ENCODE measurements at regions of chr6 and their contacts with region 1.

Region 1: DNA sequence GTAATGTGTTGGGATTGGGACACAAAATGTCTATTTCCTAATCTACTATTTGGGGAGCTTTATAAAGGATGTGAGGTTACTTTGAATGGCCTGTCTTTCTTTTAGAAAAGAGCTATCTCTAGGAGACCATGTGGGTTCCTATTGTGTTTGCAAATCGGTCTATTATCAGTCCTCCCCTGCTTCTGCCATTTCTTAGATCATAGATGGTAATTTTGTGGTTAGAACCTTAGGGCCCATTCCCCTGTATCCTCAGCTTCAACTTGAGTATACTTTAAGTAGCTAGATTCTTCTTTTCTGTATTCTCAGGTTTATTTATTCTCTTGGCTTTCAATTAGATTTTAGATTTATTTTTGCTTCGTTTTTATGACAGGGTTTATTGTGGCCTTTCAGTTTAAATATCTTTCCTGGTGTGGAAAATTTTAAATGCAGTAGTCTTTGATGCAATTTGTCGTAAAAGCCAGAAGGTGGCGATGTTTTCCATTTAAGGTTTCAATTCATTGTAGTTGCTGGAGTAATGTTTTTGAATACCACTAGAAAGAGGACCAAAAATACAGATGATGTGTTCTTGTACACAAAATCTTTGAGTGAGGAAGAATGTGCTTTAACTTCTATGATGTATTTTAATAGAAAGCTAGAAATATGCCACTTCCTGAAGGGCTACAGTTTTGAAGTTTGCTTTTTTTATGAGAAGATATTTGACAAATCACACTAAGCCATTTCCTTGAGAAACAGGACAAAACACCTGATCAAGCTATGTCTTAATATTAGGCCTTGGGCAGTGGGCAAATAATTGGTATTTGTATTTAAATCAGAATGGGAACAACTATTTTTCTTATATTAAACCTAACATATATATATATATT is 20.3 kb downstream of the TBPL1 start:
- DNase-seq: no peak
- H3K4me3 ChIP-seq: no peak overlapping the region
- H3K27ac ChIP-seq: no peak overlapping the region
- H3K4me1 ChIP-seq: peaks cover 0 to 7% (median 0%) of the 10 kb centered on the region in 4 experiments; a peak in 3 of 7 replicates
- H3K27me3 ChIP-seq: no peaks in the 10 kb centered on the region
- CTCF ChIP-seq: peak in 2 of 3 experiments; percentile 38 to 53; a peak in 2 of 4 replicates
- EP300 ChIP-seq: no peak
- POLR2A ChIP-seq: no peak
- RAD21 ChIP-seq: peak; percentile 71 to 75

Region 2: GRCh38 chr6:133945158-133945557 is 28.2 kb before region 1 on chr6:
- CTCF ChIA-PET with region 1: interaction called, 12 read pairs
- POLR2A ChIA-PET with region 1: no interaction called
- DNase-seq: no peak
- H3K4me3 ChIP-seq: no peak overlapping the region
- H3K27ac ChIP-seq: no peak overlapping the region
- H3K4me1 ChIP-seq: no peaks in the 10 kb centered on the region; a peak in 1 of 7 replicates
- H3K27me3 ChIP-seq: no peaks in the 10 kb centered on the region
- CTCF ChIP-seq: peak in 2 of 3 experiments; percentile 15 to 23; a peak in 2 of 4 replicates
- EP300 ChIP-seq: no peak
- POLR2A ChIP-seq: no peak
- RAD21 ChIP-seq: no peak

Region 3: DNA sequence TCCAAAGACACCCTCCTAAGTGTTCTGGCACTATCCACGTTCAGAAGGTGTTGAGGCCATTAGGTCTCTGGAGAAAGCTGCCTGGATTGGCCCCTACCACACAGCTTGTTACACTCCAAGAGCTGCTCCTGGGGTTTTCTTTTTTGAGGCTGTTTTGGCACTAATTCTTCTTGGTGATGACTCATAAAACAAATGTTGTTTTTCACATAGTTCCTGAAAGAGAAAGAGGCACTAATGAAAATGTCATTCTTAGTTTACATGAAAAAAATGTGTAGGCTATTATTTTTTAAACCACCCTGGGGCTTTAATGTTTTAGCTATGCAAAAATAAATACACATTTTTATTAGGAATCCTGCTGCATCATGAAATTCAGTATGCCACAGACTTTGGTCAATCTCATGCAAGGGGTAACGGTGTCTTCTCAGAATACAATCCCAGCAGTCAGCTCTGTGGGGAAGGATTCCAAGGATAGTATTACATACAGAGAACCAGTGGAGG is 17.8 kb after region 1 on chr6:
- CTCF ChIA-PET with region 1: interaction called, 22 read pairs
- POLR2A ChIA-PET with region 1: interaction called, 4 read pairs
- DNase-seq: no peak
- H3K4me3 ChIP-seq: no peak overlapping the region
- H3K27ac ChIP-seq: no peak overlapping the region
- H3K4me1 ChIP-seq: peaks cover 0 to 6% (median 3%) of the 10 kb centered on the region in 4 experiments; a peak in 2 of 7 replicates
- H3K27me3 ChIP-seq: no peaks in the 10 kb centered on the region
- CTCF ChIP-seq: no peak
- EP300 ChIP-seq: no peak
- POLR2A ChIP-seq: no peak
- RAD21 ChIP-seq: no peak

Region 4: GRCh38 chr6:134047673-134048072 is 74.3 kb after region 1 on chr6:
- CTCF ChIA-PET with region 1: interaction called, 18 read pairs
- POLR2A ChIA-PET with region 1: no interaction called
- DNase-seq: no peak
- H3K4me3 ChIP-seq: no peak overlapping the region
- H3K27ac ChIP-seq: no peak overlapping the region
- H3K4me1 ChIP-seq: peaks cover 0 to 5% (median 4%) of the 10 kb centered on the region in 4 experiments; a peak in 3 of 7 replicates
- H3K27me3 ChIP-seq: no peaks in the 10 kb centered on the region
- CTCF ChIP-seq: no peak
- EP300 ChIP-seq: no peak
- POLR2A ChIP-seq: no peak
- RAD21 ChIP-seq: no peak

Region 5: GRCh38 chr6:134080171-134080795 is 106.9 kb after region 1 on chr6:
- CTCF ChIA-PET with region 1: interaction called, 27 read pairs
- POLR2A ChIA-PET with region 1: no interaction called
- DNase-seq: no peak
- H3K4me3 ChIP-seq: no peak overlapping the region
- H3K27ac ChIP-seq: no peak overlapping the region
- H3K4me1 ChIP-seq: no peaks in the 10 kb centered on the region
- H3K27me3 ChIP-seq: no peaks in the 10 kb centered on the region
- CTCF ChIP-seq: no peak
- EP300 ChIP-seq: no peak
- POLR2A ChIP-seq: no peak
- RAD21 ChIP-seq: no peak

Region 6: DNA sequence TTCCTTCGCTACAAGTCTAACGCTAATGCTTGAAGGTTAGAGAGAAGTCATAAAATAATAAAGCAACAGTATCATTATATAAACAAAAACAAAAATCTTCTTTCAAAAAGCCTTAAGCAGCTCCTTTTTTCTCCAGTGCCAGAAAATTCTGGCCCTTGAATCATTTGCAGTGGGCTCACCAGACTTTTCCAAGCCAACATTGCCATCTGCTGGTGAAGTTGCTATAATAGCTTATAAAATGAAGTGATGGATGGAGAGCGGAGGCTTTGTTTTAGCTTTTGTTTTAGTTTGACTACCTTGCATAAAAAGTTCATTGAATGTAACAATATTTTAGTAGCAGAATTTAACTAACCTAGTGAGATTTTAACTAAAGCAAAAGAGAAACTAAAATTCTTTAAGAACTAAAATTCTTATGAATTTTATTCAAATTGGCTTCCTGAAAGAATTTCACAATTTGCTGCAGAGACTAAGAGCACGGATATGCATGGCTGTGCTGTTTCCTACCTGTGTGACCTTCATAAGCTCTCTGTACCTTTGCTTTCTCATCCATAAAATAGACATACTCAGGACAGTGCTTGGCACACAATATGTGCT is 123.9 kb after region 1 on chr6:
- CTCF ChIA-PET with region 1: interaction called, 62 read pairs
- POLR2A ChIA-PET with region 1: no interaction called
- DNase-seq: peak in 1 of 2 experiments; percentile 71
- H3K4me3 ChIP-seq: no peak overlapping the region
- H3K27ac ChIP-seq: no peak overlapping the region
- H3K4me1 ChIP-seq: no peaks in the 10 kb centered on the region
- H3K27me3 ChIP-seq: peaks cover 0 to under 1% (median 0%) of the 10 kb centered on the region in 4 experiments; a peak in 1 of 7 replicates
- CTCF ChIP-seq: peak in 2 of 3 experiments; percentile 63 to 69; a peak in 3 of 4 replicates
- EP300 ChIP-seq: no peak
- POLR2A ChIP-seq: no peak
- RAD21 ChIP-seq: peak; percentile 96 to 98